ENCODE measurements at regions of chr19 and their contacts with region 1.

Region 1: GRCh38 chr19:18117692-18118378 is 20.3 kb downstream of the MAST3 start:
- DNase-seq: peak; percentile 97
- ATAC-seq: peak; percentile 79
- H3K4me3 Mint-ChIP-seq: peak overlapping the region; percentile 74
- H3K27ac Mint-ChIP-seq: peak overlapping the region; percentile 84
- H3K4me1 Mint-ChIP-seq: peaks cover 35% of the 10 kb centered on the region
- H3K27me3 Mint-ChIP-seq: no peaks in the 10 kb centered on the region

Region 2: DNA sequence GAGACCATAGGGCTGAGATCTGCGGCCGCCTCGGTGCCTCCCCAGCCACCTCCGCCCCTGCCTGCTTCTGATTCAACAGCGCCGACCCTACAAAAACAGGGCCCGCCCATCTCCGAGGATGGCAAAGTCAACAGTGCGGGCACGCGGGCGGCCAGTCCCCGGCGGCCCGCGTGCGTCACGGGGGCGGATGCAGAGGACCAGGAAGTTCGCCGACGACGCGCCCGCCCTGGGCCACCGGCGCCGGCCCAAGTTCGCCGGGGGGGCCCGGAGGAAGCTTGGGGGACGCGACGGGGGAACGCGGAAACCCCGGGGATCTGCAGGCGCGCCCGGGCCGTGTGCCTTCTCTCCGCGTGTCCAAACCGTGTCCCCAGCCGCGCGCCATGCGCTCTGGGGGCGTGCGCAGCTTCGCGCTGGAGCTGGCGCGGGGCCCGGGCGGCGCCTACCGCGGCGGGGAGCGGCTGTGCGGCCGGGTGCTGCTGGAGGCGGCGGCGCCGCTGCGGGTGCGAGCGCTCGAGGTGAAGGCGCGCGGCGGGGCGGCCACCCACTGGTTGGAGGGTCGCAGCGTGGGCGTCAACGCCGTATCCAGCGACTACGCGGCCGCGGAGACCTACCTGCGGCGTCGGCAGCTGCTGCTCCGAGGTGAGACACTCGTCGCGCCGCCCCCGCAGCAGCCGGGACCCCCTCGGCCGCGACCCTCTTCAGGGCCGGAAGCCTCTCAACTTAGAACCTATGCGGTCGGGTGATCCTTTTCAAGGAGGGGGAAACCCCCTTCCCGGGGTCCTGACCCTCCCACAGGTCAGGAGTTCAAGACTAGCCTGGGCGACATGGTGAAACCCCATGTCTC is 116.7 kb before region 1 on chr19:
- CTCF ChIA-PET with region 1: interaction called, 3 read pairs
- POLR2A ChIA-PET with region 1: no interaction called
- intact Hi-C with region 1: loop called in 1 of 2 experiments (anchors 2 kb)
- DNase-seq: peak; percentile 95
- ATAC-seq: peak; percentile 84
- H3K4me3 Mint-ChIP-seq: peak overlapping the region; percentile 85
- H3K27ac Mint-ChIP-seq: peak overlapping the region; percentile 95
- H3K4me1 Mint-ChIP-seq: peaks cover 25% of the 10 kb centered on the region
- H3K27me3 Mint-ChIP-seq: no peaks in the 10 kb centered on the region

Region 3: DNA sequence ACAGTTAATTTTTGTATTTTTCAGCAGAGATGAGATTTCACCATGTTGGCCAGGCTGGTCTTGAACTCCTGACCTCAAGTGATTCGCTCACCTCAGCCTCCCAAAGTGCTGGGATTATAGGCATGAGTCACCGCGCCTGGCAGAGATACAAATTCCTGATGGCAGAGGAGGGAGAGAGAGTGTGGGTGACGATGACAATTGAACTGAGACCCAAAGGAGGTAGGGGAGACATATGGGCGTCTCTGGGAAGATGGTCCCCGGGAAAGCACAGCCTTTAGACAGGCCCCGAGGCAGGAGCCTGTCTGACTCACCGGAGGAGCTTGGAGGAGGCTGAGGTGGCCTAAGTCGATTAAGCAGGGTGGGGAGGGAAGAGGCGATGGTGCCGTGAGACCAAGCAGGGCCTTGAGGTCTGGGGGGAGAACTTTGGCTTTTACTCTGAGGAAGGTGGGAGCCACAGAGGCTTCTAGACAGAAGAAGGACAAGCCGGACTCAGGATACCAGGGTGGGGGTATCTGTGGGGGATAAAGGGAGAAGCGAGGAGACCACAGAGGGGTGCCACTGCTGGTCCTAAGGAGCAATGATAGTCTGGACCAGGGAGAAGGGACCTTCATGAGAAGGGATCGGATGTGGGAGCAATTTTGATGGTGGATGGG is 71.6 kb before region 1 on chr19:
- CTCF ChIA-PET with region 1: no interaction called
- POLR2A ChIA-PET with region 1: no interaction called
- intact Hi-C with region 1: no loop called
- DNase-seq: peak; percentile 51
- ATAC-seq: no peak
- H3K4me3 Mint-ChIP-seq: no peak overlapping the region
- H3K27ac Mint-ChIP-seq: peak overlapping the region; percentile 42
- H3K4me1 Mint-ChIP-seq: peaks cover 44% of the 10 kb centered on the region
- H3K27me3 Mint-ChIP-seq: peaks cover 7% of the 10 kb centered on the region

Region 4: DNA sequence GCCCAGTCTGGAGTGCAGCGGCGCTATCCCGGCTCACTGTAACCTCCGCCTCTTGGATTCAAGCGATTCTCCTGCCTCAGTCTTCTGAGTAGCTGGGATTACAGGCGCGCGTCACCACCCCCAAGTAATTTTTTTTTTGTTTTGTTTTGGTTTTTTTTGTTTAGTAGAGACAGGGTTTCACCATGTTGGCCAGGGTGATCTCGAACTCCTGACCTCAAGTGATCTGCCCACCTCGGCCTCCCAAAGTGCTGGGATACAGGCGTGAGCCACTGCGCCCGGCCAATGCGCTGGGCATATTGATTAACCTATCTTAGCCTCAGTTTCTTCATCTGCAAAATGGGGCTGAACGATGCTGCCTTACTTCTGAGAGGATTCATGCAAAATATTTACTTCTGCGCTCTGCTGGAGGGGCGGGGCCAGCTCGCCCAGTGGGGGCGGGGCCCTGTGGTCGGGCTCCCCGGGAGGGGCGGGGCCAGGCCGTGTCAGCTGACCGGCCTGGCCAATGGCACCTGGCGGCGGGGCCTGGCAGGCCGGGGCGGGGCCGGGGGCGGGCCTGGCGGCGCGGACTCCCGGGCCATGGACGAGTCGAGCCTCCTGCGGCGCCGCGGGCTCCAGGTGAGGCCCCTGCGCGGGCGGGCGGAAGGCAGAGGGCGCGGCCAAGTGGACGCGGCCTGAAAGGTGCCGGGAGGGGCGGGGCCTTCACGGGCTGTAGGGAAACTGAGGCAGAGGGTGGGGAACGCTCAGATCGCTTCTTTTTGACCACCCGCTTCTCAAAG is 20.4 kb before region 1 on chr19 and contains the start of gene MAST3:
- CTCF ChIA-PET with region 1: interaction called, 4 read pairs
- POLR2A ChIA-PET with region 1: interaction called, 3 read pairs
- intact Hi-C with region 1: loop called in 1 of 2 experiments (anchors 1 kb)
- DNase-seq: peak; percentile 96
- ATAC-seq: peak; percentile 96
- H3K4me3 Mint-ChIP-seq: peak within 1 kb of the TSS; percentile 81
- H3K27ac Mint-ChIP-seq: peak within 1 kb of the TSS; percentile 39
- H3K4me1 Mint-ChIP-seq: peaks cover 31% of the 10 kb centered on the region
- H3K27me3 Mint-ChIP-seq: no peaks in the 10 kb centered on the region
- total RNA-seq, gene MAST3: 17.4 to 20.1 TPM

Region 5: DNA sequence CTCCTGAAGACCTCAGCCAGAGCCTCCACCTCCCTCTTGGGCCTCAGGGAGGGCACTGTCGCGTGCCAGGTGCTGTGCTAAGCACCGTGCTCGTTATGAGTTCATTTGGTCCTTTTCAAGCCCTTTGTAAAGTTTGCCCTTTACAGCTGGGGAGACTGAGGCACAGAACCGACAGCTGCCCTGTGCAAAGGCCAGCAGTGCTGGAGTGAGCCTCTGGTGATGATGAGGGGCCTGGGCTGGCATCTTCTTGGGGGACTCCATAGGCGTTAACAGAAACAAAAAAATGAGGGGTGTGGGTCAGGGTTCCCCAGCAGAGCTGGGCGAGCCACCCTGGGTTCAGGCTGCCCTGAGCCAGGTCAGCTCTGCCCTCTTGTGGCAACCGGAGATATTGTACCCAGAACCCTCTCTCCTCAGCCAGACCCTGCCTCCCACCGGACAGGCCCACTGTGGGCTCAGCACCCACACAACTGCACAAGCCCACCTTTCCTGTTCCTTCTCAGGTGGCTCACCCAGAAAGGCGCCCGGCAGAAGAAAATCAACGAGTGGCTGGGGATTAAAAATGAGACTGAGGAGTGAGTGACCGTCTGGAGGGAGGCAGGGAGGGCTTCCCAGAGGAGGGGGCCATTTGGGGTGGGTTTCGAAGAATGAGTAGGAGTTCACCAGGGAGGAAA is 50.3 kb after region 1 on chr19:
- CTCF ChIA-PET with region 1: interaction called, 7 read pairs
- POLR2A ChIA-PET with region 1: no interaction called
- intact Hi-C with region 1: loop called (anchors 1 kb)
- DNase-seq: peak; percentile 81
- ATAC-seq: peak; percentile 95
- H3K4me3 Mint-ChIP-seq: no peak overlapping the region
- H3K27ac Mint-ChIP-seq: no peak overlapping the region
- H3K4me1 Mint-ChIP-seq: peaks cover 4% of the 10 kb centered on the region
- H3K27me3 Mint-ChIP-seq: no peaks in the 10 kb centered on the region

Region 6: DNA sequence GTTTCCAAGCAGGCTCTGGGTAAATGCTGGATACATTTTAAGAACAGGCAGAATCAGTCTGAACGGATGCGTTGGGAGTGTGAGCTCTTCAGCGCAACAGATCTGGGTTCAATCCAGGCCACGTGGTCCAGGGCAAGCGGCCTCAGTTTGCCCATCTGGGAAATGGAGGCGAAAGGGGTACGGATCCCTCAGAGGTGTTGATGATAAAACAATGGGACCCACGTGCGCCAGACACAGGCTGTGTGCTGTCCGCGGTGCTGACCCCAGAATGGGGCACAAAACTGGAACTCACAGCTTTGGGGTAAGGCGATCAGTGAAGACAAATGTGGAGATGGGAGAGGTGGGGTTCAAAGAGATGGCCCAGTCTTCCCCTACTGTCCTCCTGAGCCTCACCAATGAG is 121.5 kb after region 1 on chr19:
- CTCF ChIA-PET with region 1: no interaction called
- POLR2A ChIA-PET with region 1: no interaction called
- intact Hi-C with region 1: no loop called
- DNase-seq: peak; percentile 40
- ATAC-seq: no peak
- H3K4me3 Mint-ChIP-seq: no peak overlapping the region
- H3K27ac Mint-ChIP-seq: no peak overlapping the region
- H3K4me1 Mint-ChIP-seq: no peaks in the 10 kb centered on the region
- H3K27me3 Mint-ChIP-seq: peaks cover 15% of the 10 kb centered on the region

Region 7: DNA sequence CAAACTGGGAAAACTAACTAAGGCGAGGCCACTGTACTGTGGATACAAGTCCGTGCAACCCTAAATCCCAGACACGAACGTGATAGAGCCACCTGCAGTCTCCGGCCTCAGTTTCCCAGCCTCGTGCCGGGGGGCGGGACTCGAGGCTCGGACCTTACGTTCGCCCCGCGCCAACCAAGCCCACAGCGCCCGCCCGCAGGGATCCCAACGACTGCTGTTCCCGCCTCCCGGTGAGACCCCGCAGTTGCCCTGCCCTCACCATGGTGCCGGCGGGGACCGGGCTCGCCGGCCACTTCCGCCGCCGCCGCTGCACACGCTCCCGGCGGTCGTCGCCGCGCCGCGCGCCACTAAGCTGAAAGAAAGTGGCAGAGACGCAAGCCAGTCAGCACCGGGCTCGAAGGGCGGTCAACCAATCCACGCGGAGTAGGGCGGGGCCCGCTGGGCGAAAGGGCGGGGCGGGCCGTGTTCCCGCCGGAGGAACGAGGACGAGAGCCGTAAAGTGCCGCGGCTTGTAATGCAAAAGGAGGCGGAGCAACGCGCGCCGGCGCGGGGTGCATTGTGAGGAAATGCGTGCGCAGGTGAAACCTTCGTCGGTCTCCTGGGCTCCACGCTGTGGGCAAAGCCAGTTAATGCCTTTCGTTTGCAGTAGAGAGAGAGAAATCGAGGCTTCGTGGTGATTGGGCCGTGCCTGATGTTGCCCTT is 205.1 kb after region 1 on chr19 and contains the start of gene LSM4:
- CTCF ChIA-PET with region 1: no interaction called
- POLR2A ChIA-PET with region 1: no interaction called
- intact Hi-C with region 1: loop called in 1 of 2 experiments (anchors 1 kb)
- DNase-seq: peak; percentile 100
- ATAC-seq: peak; percentile 94
- H3K4me3 Mint-ChIP-seq: peak within 1 kb of the TSS; percentile 90
- H3K27ac Mint-ChIP-seq: peak within 1 kb of the TSS; percentile 98
- H3K4me1 Mint-ChIP-seq: peaks cover 54% of the 10 kb centered on the region
- H3K27me3 Mint-ChIP-seq: no peaks in the 10 kb centered on the region
- total RNA-seq, gene LSM4: 269 to 370 TPM